ENCODE measurements at regions of chr2 and their contacts with region 1.

Region 1: DNA sequence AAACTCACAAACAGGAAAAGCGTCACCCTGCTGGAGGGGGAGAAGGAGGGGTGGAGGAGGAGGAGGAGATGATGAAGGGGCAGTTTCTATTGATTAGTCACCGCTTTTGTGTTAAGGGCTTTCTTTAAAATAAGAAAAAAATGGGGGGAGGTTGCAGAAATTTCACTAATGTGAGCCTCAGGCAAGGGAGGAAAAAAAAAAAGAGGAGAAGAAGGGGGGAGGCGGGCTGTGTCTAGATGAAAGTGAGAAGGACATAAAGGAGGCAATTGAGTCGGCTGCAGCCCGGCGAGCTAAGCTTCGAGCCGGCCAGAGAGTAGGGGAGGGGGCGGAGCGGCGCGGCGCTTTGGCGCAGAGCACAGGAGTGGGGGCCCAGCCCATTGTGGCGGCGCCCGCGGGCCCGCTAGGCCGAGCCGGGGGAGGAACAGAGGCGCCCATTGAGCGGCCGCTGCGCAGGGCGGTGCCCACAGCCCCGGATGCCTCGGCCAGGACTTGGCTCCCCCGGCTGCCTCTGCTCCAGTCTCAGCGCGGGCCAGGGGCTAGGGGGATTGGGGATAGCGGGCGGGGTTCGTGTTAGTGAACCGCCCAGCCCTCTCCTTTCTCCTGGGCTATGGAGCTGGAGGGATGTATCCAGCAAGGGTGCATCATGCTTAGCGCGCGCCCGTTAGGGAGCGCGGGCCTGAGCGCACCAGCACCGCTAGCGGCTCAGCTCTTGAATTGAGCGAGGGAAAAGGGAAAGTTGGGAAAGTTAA is 7.9 kb downstream of the PAX3 start:
- DNase-seq: peak; percentile 69 to 86
- H3K4me3 ChIP-seq: peak overlapping the region; percentile 16 to 56 (median 30); a peak in 6 of 8 replicates
- H3K27ac ChIP-seq: no peak overlapping the region
- H3K4me1 ChIP-seq: peaks cover 13 to 29% (median 20%) of the 10 kb centered on the region in 4 experiments
- H3K27me3 ChIP-seq: peaks cover 66 to 97% (median 84%) of the 10 kb centered on the region in 4 experiments
- CTCF ChIP-seq: peak in 1 of 3 experiments; percentile 19; a peak in 1 of 4 replicates
- EP300 ChIP-seq: peak in 1 of 2 experiments; percentile 10; a peak in 1 of 3 replicates
- POLR2A ChIP-seq: no peak
- RAD21 ChIP-seq: peak; percentile 20 to 21; a peak in 2 of 4 replicates

Region 2: DNA sequence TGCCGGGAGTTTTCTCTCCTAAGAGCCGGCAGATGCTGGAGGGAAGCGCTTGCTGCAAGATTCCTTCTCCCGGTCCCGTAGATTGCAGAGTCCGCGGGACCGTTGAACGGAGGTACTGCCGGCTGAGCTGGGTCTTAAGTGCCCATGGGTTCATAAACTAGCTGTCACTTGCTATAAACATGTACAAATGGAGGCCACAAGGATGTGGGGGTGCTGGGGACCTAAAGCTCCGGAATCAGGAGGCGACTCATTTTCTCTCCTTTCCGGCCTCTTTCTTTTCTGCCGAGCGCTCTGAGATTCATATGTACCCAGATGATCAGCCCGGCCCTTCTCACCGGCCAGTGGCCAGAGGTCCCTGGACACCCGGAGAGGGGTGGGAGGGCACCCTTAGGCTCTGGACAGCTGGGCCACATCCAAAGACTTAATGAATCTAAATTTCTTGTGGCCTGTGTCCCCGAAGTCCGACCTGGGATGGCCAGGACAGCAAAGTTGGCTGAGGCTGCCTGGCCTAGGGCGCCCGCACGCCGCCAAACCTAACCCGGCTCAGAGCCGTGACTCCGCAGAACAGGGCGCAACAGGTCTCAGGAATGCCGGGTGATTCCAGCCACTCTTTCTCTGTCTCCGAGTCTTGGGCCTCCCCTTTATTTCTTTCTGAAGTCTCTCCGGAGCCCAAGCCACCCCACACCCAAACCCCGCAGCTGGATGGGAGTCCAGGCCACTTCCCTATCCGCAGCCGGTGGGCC is 10.3 kb after region 1 on chr2:
- CTCF ChIA-PET with region 1: interaction called, 9 read pairs
- POLR2A ChIA-PET with region 1: interaction called, 12 read pairs
- DNase-seq: peak in 1 of 2 experiments; percentile 63
- H3K4me3 ChIP-seq: 0 out of 8 replicates have a peak overlapping the region, but pooled peaks of 1 of the 4 experiments have one; percentile 1
- H3K27ac ChIP-seq: no peak overlapping the region
- H3K4me1 ChIP-seq: peaks cover 15 to 28% (median 21%) of the 10 kb centered on the region in 4 experiments
- H3K27me3 ChIP-seq: peaks cover 95 to 100% (median 100%) of the 10 kb centered on the region in 4 experiments
- CTCF ChIP-seq: no peak
- EP300 ChIP-seq: no peak
- POLR2A ChIP-seq: no peak
- RAD21 ChIP-seq: no peak

Region 3: DNA sequence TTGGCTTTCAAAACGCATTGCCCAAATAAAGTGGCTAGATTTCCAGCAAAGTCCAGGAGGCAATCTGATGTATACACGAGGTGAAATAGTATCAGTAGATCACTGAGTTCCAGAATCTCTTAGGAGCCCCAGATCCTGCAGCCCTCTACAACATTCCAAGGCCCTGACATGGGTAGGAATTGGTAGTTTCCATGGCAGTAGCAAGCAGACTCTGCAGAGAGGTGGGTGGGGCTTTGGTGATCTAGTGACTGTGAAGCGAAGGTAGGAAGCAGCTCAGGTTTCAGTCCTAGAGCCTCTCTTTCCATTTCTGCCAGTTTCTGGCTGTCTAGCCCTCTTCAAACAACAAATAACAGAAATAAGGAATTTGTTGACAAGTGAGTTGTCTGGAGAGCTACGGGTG is 119.6 kb after region 1 on chr2:
- CTCF ChIA-PET with region 1: no interaction called
- POLR2A ChIA-PET with region 1: no interaction called
- DNase-seq: no peak
- H3K4me3 ChIP-seq: no peak overlapping the region
- H3K27ac ChIP-seq: no peak overlapping the region
- H3K4me1 ChIP-seq: no peaks in the 10 kb centered on the region
- H3K27me3 ChIP-seq: no peaks in the 10 kb centered on the region
- CTCF ChIP-seq: no peak
- EP300 ChIP-seq: no peak
- POLR2A ChIP-seq: no peak
- RAD21 ChIP-seq: no peak

Measured in H1 (cell line).